ENCODE measurements at regions of chr7 and their contacts with region 1.

Region 1: DNA sequence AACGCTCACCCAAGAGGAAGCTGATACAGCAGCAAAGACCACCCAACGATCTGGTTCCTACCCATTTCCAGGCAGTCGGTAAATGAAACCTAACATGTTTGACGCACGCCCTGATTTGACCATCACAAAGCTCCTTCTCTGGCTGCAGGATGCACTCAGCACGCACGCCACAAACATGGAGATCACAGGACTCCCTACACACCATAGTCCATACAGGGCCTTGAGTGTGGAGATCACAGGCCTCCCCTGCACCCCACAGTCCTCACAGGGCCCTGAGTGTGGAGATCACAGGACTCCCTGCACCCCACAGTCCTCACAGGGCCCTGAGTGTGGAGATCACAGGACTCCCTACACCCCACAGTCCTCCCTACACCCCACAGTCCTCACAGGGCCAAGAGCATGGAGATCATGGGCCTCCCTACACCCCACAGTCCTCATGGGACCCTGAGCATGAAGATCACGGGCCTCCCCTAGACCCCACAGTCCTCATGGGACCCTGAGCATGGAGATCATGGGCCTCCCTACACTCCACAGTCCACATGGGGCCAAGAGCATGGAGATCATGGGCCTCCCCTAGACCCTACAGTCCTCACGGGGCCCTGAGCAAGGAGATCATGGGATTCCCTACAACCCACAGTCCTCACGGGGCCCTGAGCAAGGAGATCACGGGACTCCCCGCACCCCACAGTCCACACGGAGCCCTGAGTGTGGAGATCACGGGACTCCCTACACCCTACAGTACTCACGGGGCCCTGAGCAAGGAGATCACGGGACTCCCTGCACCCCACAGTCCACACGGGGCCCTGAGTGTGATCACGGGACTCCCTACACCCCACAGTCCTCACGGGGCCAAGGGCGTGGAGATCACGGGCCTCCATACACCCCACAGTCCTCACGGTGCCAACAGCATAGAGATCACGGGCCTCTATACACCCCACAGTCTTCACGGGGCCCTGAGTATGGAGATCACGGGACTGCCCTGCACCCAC is 409.2 kb downstream of the DNAJB6 start:
- DNase-seq: no peak
- H3K4me3 ChIP-seq: no peak overlapping the region
- H3K27ac ChIP-seq: no peak overlapping the region
- H3K4me1 ChIP-seq: no peaks in the 10 kb centered on the region
- H3K27me3 ChIP-seq: no peaks in the 10 kb centered on the region
- CTCF ChIP-seq: no peak
- POLR2A ChIP-seq: no peak

Region 2: GRCh38 chr7:156257904-156258303 is 1488.1 kb before region 1 on chr7:
- intact Hi-C with region 1: loop called (anchors 5 kb)
- DNase-seq: no peak
- H3K4me3 ChIP-seq: no peak overlapping the region
- H3K27ac ChIP-seq: no peak overlapping the region
- H3K4me1 ChIP-seq: no peaks in the 10 kb centered on the region
- H3K27me3 ChIP-seq: no peaks in the 10 kb centered on the region
- CTCF ChIP-seq: no peak
- POLR2A ChIP-seq: no peak

Region 3: GRCh38 chr7:156397249-156397648 is 1348.8 kb before region 1 on chr7:
- intact Hi-C with region 1: no loop called
- DNase-seq: no peak
- H3K4me3 ChIP-seq: no peak overlapping the region
- H3K27ac ChIP-seq: no peak overlapping the region
- H3K4me1 ChIP-seq: no peaks in the 10 kb centered on the region
- H3K27me3 ChIP-seq: peaks cover 0 to 4% of the 10 kb centered on the region in 2 donors
- CTCF ChIP-seq: no peak
- POLR2A ChIP-seq: no peak

Region 4: GRCh38 chr7:156460858-156461627 is 1285.0 kb before region 1 on chr7:
- intact Hi-C with region 1: no loop called
- DNase-seq: no peak
- H3K4me3 ChIP-seq: no peak overlapping the region
- H3K27ac ChIP-seq: no peak overlapping the region
- H3K4me1 ChIP-seq: no peaks in the 10 kb centered on the region
- H3K27me3 ChIP-seq: no peaks in the 10 kb centered on the region
- CTCF ChIP-seq: no peak
- POLR2A ChIP-seq: no peak

Region 5: GRCh38 chr7:156956727-156957126 is 789.3 kb before region 1 on chr7:
- intact Hi-C with region 1: no loop called
- DNase-seq: no peak
- H3K4me3 ChIP-seq: no peak overlapping the region
- H3K27ac ChIP-seq: no peak overlapping the region
- H3K4me1 ChIP-seq: no peaks in the 10 kb centered on the region
- H3K27me3 ChIP-seq: no peaks in the 10 kb centered on the region
- CTCF ChIP-seq: no peak
- POLR2A ChIP-seq: no peak

Region 6: DNA sequence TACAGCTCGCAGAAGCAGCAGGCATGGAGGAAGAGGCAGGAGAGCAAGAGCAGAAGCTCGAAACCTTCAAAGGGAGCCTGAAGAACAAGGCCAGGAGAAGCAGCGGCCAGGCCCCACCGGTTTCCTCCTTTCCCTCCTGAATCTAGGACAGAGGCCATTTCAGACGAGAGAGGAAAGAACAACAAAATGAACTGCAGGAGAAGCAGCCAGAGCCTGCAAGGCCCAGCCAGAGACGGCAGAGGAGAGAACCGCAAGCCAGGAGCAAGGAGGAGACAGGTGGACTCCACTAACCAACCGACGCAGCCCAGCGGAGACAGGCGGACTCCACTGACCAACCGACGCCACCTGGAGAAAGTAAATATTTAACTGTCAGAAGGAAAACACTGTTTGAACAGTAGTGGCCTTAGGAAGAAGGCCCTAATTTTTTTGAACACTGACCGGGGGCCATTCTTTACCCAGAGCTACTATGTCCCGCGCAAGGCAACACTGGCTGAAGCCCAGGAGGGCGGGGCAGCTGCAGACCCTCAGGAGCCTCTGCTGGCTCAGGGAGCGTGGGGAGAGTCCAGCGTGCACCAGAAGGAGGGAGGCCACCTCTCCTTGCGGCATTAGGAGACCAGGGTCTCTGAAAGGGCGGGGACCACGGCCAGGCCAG is 282.4 kb after region 1 on chr7:
- intact Hi-C with region 1: no loop called
- DNase-seq: peak in 1 of 2 donors; percentile 71
- H3K4me3 ChIP-seq: no peak overlapping the region
- H3K27ac ChIP-seq: no peak overlapping the region
- H3K4me1 ChIP-seq: no peaks in the 10 kb centered on the region
- H3K27me3 ChIP-seq: no peaks in the 10 kb centered on the region
- CTCF ChIP-seq: no peak
- POLR2A ChIP-seq: no peak

Measured in breast epithelium (tissue), 4 donors.